ENCODE measurements at regions of chr4 and their contacts with region 1.

Region 1: DNA sequence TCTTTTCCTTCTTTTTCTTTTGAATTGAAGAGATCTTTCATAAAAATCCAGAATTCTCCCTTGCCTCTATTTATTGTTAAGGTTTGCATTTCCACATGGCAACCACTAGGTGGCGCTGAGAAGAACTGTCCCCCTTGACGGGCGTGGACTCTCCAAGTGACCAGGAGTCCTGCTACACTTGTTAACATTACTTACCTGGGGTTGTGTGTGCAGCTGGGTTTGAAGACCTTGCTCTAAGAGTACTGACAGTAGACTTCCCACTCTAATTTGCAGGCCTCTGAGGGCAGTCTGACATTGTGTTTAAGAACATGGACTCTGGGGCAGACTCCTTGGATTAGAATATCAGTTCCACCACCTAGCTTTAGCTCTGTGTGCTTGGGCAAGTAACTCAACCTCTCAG is 52.8 kb downstream of the GPRIN3 start:
- DNase-seq: no peak
- ATAC-seq: no peak

Region 2: GRCh38 chr4:88991761-88992160 is 263.1 kb before region 1 on chr4:
- intact Hi-C with region 1: no loop called
- DNase-seq: no peak
- ATAC-seq: no peak

Region 3: GRCh38 chr4:89172860-89173259 is 82.0 kb before region 1 on chr4:
- intact Hi-C with region 1: no loop called
- DNase-seq: no peak
- ATAC-seq: no peak

Region 4: GRCh38 chr4:89307446-89308160 is 52.8 kb after region 1 on chr4 and contains the start of gene GPRIN3:
- intact Hi-C with region 1: loop called (anchors 10 kb)
- DNase-seq: peak; percentile 72
- ATAC-seq: peak; percentile 80
- total RNA-seq, gene GPRIN3: 7.4 TPM